ENCODE measurements at regions of chr7 and their contacts with region 1.

Region 1: GRCh38 chr7:100991631-100992030 is 22.3 kb downstream of the MUC12 start:
- DNase-seq: no peak
- H3K4me3 ChIP-seq: no peak overlapping the region
- H3K27ac ChIP-seq: no peak overlapping the region
- H3K4me1 ChIP-seq: no peaks in the 10 kb centered on the region
- H3K27me3 ChIP-seq: no peaks in the 10 kb centered on the region
- CTCF ChIP-seq: no peak
- EP300 ChIP-seq: no peak
- POLR2A ChIP-seq: no peak

Region 2: GRCh38 chr7:101020444-101020843 is 28.8 kb after region 1 on chr7:
- in situ Hi-C with region 1: no loop called
- intact Hi-C with region 1: loop called (anchors 1 kb)
- DNase-seq: no peak
- H3K4me3 ChIP-seq: no peak overlapping the region
- H3K27ac ChIP-seq: peak overlapping the region in 1 of 4 donors; percentile 3
- H3K4me1 ChIP-seq: peaks cover 5 to 18% (median 12%) of the 10 kb centered on the region in 4 donors
- H3K27me3 ChIP-seq: no peaks in the 10 kb centered on the region
- CTCF ChIP-seq: no peak
- EP300 ChIP-seq: no peak
- POLR2A ChIP-seq: no peak

Region 3: GRCh38 chr7:101333912-101334311 is 342.3 kb after region 1 on chr7:
- in situ Hi-C with region 1: no loop called
- intact Hi-C with region 1: no loop called
- DNase-seq: peak; percentile 23
- H3K4me3 ChIP-seq: no peak overlapping the region
- H3K27ac ChIP-seq: no peak overlapping the region
- H3K4me1 ChIP-seq: no peaks in the 10 kb centered on the region
- H3K27me3 ChIP-seq: no peaks in the 10 kb centered on the region
- CTCF ChIP-seq: no peak
- EP300 ChIP-seq: no peak
- POLR2A ChIP-seq: no peak

Measured in transverse colon (tissue), 4 donors.